ENCODE measurements at regions of chr12 and their contacts with region 1.

Region 1: GRCh38 chr12:12334367-12335040 is 15.5 kb downstream of the MANSC1 start:
- DNase-seq: peak; percentile 56
- ATAC-seq: peak; percentile 38
- H3K4me3 ChIP-seq: no peak overlapping the region
- H3K27ac ChIP-seq: peak overlapping the region; percentile 85
- H3K4me1 ChIP-seq: peaks cover 51% of the 10 kb centered on the region
- H3K27me3 ChIP-seq: no peaks in the 10 kb centered on the region
- CTCF ChIP-seq: peak; percentile 84

Region 2: DNA sequence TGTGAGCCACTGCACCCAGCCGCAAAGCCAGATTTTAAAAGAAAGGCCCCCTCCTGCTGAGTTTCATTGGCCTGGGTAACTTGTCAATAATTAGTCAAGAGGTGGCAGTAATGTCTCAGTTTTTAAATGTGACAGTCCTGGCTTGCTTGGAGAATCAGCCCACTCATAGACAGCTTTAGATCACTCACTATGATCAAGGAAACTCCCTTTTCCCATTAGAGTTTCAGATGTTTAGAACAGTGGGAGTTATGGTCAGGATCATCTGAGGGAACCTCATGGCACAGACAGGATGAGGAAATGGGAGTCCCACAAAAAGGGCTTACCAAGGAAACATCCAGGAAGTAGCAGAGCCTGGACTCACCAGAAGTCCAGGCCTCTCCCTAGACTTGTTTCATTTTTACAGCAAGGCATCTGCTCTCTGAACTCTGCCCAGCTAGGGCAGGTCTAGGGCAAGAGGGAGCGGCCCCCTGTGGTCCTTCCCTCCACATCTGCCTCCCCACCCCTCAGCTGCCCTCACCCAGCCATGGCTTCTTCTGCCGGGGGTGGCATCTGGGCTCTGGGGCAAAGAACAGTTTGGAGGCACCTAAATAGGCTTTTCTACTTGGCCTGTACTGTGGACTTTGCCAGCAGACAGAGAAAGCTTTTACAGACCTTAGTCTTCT is 252.5 kb before region 1 on chr12:
- CTCF ChIA-PET with region 1: no interaction called
- POLR2A ChIA-PET with region 1: no interaction called
- intact Hi-C with region 1: loop called (anchors 2 kb)
- DNase-seq: peak; percentile 52
- ATAC-seq: peak; percentile 83
- H3K4me3 ChIP-seq: no peak overlapping the region
- H3K27ac ChIP-seq: no peak overlapping the region
- H3K4me1 ChIP-seq: peaks cover 5% of the 10 kb centered on the region; the same call in 1 of the 2 replicates
- H3K27me3 ChIP-seq: no peaks in the 10 kb centered on the region
- CTCF ChIP-seq: peak; percentile 51

Region 3: GRCh38 chr12:12167847-12168246 is 166.7 kb before region 1 on chr12:
- CTCF ChIA-PET with region 1: no interaction called
- POLR2A ChIA-PET with region 1: no interaction called
- intact Hi-C with region 1: loop called (anchors 5 kb)
- DNase-seq: peak; percentile 35
- ATAC-seq: peak; percentile 95
- H3K4me3 ChIP-seq: no peak overlapping the region
- H3K27ac ChIP-seq: peak overlapping the region; percentile 5; the same call in 1 of the 2 replicates
- H3K4me1 ChIP-seq: peaks cover 4% of the 10 kb centered on the region
- H3K27me3 ChIP-seq: no peaks in the 10 kb centered on the region
- CTCF ChIP-seq: no peak

Region 4: DNA sequence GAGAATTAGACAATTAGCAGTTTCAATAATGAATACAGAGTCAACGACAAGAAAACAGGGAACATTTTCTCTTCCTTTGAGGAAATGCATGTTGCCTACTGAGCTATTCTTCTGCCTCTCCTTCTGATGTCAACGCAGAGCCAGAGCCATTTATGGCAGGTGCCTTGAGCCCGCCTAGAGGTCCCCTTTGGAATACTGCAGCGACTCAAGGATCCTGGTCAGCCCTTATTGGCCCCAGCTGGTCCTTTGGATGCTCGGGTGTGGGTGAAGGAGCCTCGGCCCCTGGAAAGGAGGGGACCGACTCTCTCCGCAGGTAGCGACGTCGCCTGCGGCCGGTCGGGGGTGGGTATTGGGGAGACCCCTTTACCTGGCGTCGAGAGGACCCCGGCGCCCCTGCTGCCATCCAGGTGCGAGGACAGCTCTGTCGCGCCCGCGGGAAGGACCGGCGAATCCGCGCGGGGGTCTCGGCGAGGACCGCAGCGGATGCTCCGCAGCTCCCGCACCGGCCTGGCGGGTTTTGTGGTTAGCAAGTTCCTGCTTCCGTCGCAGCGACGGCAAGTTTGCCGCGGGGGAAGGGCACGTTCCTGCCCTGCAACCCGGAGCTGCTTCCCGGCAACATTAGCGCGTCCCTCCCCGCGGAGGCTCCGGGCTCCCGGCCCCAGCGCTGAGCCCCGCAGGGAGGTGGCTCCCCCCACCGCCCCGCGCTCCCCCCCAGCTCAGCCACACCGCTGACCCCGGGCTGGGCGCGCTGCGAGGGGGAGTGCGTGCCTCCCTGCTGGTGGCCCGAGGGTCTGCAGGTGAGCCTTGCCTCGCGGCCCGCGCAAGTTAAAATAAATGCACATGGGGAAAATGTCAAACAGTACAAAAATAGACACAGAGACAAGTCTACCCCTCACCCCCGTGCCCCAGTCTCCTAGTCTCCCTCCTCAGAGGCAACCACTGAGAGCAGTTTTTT is 15.5 kb after region 1 on chr12 and contains the start of gene MANSC1:
- CTCF ChIA-PET with region 1: interaction called, 8 read pairs
- POLR2A ChIA-PET with region 1: interaction called, 6 read pairs
- intact Hi-C with region 1: loop called (anchors 2 kb)
- DNase-seq: peak; percentile 58
- ATAC-seq: peak; percentile 69
- H3K4me3 ChIP-seq: peak within 1 kb of the TSS; percentile 76
- H3K27ac ChIP-seq: peak within 1 kb of the TSS; percentile 94
- H3K4me1 ChIP-seq: peaks cover 20% of the 10 kb centered on the region
- H3K27me3 ChIP-seq: no peaks in the 10 kb centered on the region
- CTCF ChIP-seq: no peak; the same call in 1 of the 2 replicates
- total RNA-seq, gene MANSC1: 2.8 and 3.1 TPM in 2 replicates

Region 5: GRCh38 chr12:12592930-12593329 is 258.4 kb after region 1 on chr12:
- CTCF ChIA-PET with region 1: no interaction called
- POLR2A ChIA-PET with region 1: no interaction called
- intact Hi-C with region 1: no loop called
- DNase-seq: peak; percentile 62
- ATAC-seq: peak; percentile 37; the same call in 1 of the 2 replicates
- H3K4me3 ChIP-seq: no peak overlapping the region
- H3K27ac ChIP-seq: peak overlapping the region; percentile 20; the same call in 1 of the 2 replicates
- H3K4me1 ChIP-seq: peaks cover 17% of the 10 kb centered on the region
- H3K27me3 ChIP-seq: no peaks in the 10 kb centered on the region
- CTCF ChIP-seq: no peak

Region 6: GRCh38 chr12:12704593-12705230 is 370.2 kb after region 1 on chr12:
- CTCF ChIA-PET with region 1: no interaction called
- POLR2A ChIA-PET with region 1: no interaction called
- intact Hi-C with region 1: loop called (anchors 5 kb)
- DNase-seq: peak; percentile 89
- ATAC-seq: peak; percentile 97
- H3K4me3 ChIP-seq: no peak overlapping the region
- H3K27ac ChIP-seq: peak overlapping the region; percentile 17; the same call in 1 of the 2 replicates
- H3K4me1 ChIP-seq: peaks cover 5% of the 10 kb centered on the region
- H3K27me3 ChIP-seq: no peaks in the 10 kb centered on the region
- CTCF ChIP-seq: peak; percentile 97

Measured in PC-3 (cell line).